Activated CD8-positive, alpha-beta T cell treated with anti-CD3 and anti-CD28 coated beads, Interleukin-2, amount 10 ng/mL, durations not matched to agents 7 days and 5 days (primary cell): ENCODE measurements at regions of chr18 and their contacts with region 1.

Region 1: DNA sequence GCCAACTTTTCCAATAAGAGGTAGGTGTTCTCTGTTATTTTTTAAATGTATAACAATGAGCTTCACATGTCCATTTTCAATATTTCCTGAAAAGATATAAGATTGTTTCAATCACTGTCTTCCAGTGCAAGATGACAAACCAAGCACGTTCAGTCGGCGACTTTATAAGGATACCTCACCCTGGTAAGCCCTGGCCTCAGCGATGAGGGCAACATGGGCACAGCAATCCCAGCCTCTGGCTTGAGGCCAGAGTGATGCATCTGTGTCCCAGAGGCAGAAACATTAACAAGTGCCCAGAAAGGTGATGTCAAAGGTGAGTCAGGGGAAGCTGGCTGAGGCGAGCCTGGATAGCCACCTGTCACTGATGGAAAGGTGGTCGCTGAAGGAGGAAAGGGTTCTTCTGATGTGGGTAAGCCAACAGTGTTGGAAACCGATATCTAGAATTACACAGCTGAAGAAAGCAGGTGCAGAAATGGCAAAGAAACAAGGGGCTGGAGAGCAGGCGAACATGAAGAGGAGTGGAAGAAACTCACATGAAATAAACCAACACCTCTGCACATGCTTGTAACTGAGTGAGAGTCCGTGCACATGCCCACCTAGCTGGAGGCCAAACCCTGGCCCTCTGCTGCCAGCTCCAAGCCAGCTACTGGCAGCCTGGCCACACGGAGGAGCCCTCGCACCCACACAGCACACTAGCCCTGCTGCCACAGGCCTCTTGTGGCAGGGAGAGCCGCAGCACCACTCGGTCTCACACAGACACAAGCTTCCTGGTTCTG is 65.5 kb downstream of the FBXO15 start:
- DNase-seq: peak; percentile 84
- ATAC-seq: peak; percentile 100
- H3K4me3 Mint-ChIP-seq: peak overlapping the region; percentile 72
- H3K27ac Mint-ChIP-seq: peak overlapping the region; percentile 93
- H3K4me1 Mint-ChIP-seq: peaks cover 19% of the 10 kb centered on the region
- H3K27me3 Mint-ChIP-seq: peaks cover 2% of the 10 kb centered on the region

Region 2: DNA sequence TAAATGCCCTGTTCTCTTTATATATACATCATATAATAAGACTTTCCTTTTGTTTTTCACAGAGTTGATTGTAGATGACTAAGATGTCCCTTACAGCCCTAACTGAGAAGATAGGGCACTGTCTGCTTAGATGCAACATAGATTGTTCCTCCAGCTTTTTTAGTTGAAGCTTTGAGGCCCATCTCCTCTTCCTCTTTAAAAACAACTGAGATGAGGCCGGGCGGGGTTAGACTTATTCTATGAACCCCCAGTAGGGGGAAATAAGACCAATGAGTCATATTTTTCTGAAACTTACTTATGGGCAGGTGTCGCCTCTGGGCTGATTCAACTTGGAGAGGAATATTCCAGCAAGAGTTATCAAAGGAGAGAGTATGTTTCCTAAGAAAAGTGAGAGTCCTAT is 19.1 kb before region 1 on chr18:
- CTCF ChIA-PET with region 1: interaction called, 90 read pairs
- POLR2A ChIA-PET with region 1: interaction called, 50 read pairs
- DNase-seq: peak; percentile 48
- ATAC-seq: peak; percentile 48
- H3K4me3 Mint-ChIP-seq: no peak overlapping the region
- H3K27ac Mint-ChIP-seq: no peak overlapping the region
- H3K4me1 Mint-ChIP-seq: peaks cover 39% of the 10 kb centered on the region
- H3K27me3 Mint-ChIP-seq: no peaks in the 10 kb centered on the region

Region 3: GRCh38 chr18:74108460-74108859 is 26.3 kb after region 1 on chr18:
- CTCF ChIA-PET with region 1: interaction called, 114 read pairs
- POLR2A ChIA-PET with region 1: interaction called, 3 read pairs
- DNase-seq: no peak
- ATAC-seq: no peak
- H3K4me3 Mint-ChIP-seq: no peak overlapping the region
- H3K27ac Mint-ChIP-seq: no peak overlapping the region
- H3K4me1 Mint-ChIP-seq: peaks cover 25% of the 10 kb centered on the region
- H3K27me3 Mint-ChIP-seq: no peaks in the 10 kb centered on the region

Region 4: DNA sequence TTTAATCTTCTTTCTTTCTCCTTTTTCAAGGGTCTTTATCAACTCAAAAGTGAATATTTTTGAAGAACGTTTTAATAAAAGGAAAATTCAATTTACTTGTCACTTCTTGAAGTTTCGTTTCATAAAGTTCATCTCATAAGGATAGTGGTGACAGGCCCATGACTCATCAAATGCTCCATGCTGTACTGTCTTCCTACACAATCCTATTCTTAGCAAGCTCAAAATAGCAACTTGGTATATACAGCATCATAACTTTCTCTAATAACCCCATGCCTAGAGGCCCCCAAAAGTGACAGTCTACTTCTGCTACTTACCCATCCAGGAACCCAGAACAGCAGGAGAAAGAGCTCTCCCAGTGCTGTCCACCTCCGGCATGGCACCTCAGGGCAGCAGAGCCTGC is 57.7 kb after region 1 on chr18:
- CTCF ChIA-PET with region 1: interaction called, 23 read pairs
- POLR2A ChIA-PET with region 1: no interaction called
- DNase-seq: no peak
- ATAC-seq: peak; percentile 36
- H3K4me3 Mint-ChIP-seq: no peak overlapping the region
- H3K27ac Mint-ChIP-seq: no peak overlapping the region
- H3K4me1 Mint-ChIP-seq: peaks cover 9% of the 10 kb centered on the region
- H3K27me3 Mint-ChIP-seq: peaks cover 2% of the 10 kb centered on the region